Naive thymus-derived CD4-positive, alpha-beta T cell (primary cell): ENCODE measurements at regions of chr11 and their contacts with region 1.

Region 1: GRCh38 chr11:124070915-124071635 is 29.9 kb upstream of the OR10G7 start:
- DNase-seq: peak; percentile 33 to 63 (median 56)
- ATAC-seq: peak; percentile 57
- H3K4me3 ChIP-seq: no peak overlapping the region
- H3K4me3 Mint-ChIP-seq: no peak overlapping the region
- H3K27ac ChIP-seq: no peak overlapping the region
- H3K27ac Mint-ChIP-seq: no peak overlapping the region
- H3K4me1 ChIP-seq: no peaks in the 10 kb centered on the region
- H3K4me1 Mint-ChIP-seq: peaks cover 0 to 21% (median 0%) of the 10 kb centered on the region in 7 donors
- H3K27me3 ChIP-seq: peaks cover 0 to 4% of the 10 kb centered on the region in 2 donors
- H3K27me3 Mint-ChIP-seq: peaks cover 24 to 68% (median 54%) of the 10 kb centered on the region in 5 donors

Region 2: GRCh38 chr11:124114942-124115781 is 44.1 kb after region 1 on chr11 and contains the start of gene VWA5A:
- CTCF ChIA-PET with region 1: interaction called, 3 read pairs
- POLR2A ChIA-PET with region 1: no interaction called
- intact Hi-C with region 1: loop called in 1 of 2 experiments (anchors 1 kb)
- DNase-seq: peak; percentile 22 to 73 (median 59)
- ATAC-seq: peak; percentile 97
- H3K4me3 ChIP-seq: peak within 1 kb of the TSS; percentile 89
- H3K4me3 Mint-ChIP-seq: peak within 1 kb of the TSS; percentile 86 to 100 (median 90)
- H3K27ac ChIP-seq: peak within 1 kb of the TSS; percentile 41
- H3K27ac Mint-ChIP-seq: peak within 1 kb of the TSS; percentile 66 to 95 (median 83)
- H3K4me1 ChIP-seq: peaks cover 7 to 8% of the 10 kb centered on the region in 2 donors
- H3K4me1 Mint-ChIP-seq: peaks cover 13 to 37% (median 22%) of the 10 kb centered on the region in 7 donors
- H3K27me3 ChIP-seq: no peaks in the 10 kb centered on the region
- H3K27me3 Mint-ChIP-seq: peaks cover 0 to 15% (median 12%) of the 10 kb centered on the region in 5 donors
- total RNA-seq, gene VWA5A: 5.2 to 10.2 (median 8.3) TPM

Region 3: GRCh38 chr11:124194698-124195410 is 123.8 kb after region 1 on chr11:
- CTCF ChIA-PET with region 1: interaction called, 26 read pairs
- POLR2A ChIA-PET with region 1: no interaction called
- intact Hi-C with region 1: loop called (anchors 1 kb)
- DNase-seq: peak in 6 of 9 donors; percentile 14 to 34 (median 26)
- ATAC-seq: peak; percentile 83
- H3K4me3 ChIP-seq: no peak overlapping the region
- H3K4me3 Mint-ChIP-seq: no peak overlapping the region
- H3K27ac ChIP-seq: no peak overlapping the region
- H3K27ac Mint-ChIP-seq: no peak overlapping the region
- H3K4me1 ChIP-seq: no peaks in the 10 kb centered on the region
- H3K4me1 Mint-ChIP-seq: peaks cover 0 to 2% (median 0%) of the 10 kb centered on the region in 7 donors
- H3K27me3 ChIP-seq: no peaks in the 10 kb centered on the region
- H3K27me3 Mint-ChIP-seq: peaks cover under 1 to 24% (median 13%) of the 10 kb centered on the region in 5 donors

Region 4: GRCh38 chr11:124329787-124330478 is 258.9 kb after region 1 on chr11:
- CTCF ChIA-PET with region 1: no interaction called
- POLR2A ChIA-PET with region 1: no interaction called
- intact Hi-C with region 1: loop called in 1 of 2 experiments (anchors 10 kb)
- DNase-seq: no peak
- ATAC-seq: no peak
- H3K4me3 ChIP-seq: no peak overlapping the region
- H3K4me3 Mint-ChIP-seq: no peak overlapping the region
- H3K27ac ChIP-seq: no peak overlapping the region
- H3K27ac Mint-ChIP-seq: no peak overlapping the region
- H3K4me1 ChIP-seq: no peaks in the 10 kb centered on the region
- H3K4me1 Mint-ChIP-seq: peaks cover 0 to 4% (median 0%) of the 10 kb centered on the region in 7 donors
- H3K27me3 ChIP-seq: no peaks in the 10 kb centered on the region
- H3K27me3 Mint-ChIP-seq: peaks cover 7 to 29% (median 18%) of the 10 kb centered on the region in 5 donors

Region 5: GRCh38 chr11:124402326-124402922 is 331.3 kb after region 1 on chr11:
- CTCF ChIA-PET with region 1: no interaction called
- POLR2A ChIA-PET with region 1: no interaction called
- intact Hi-C with region 1: loop called in 1 of 2 experiments (anchors 5 kb)
- DNase-seq: peak in 5 of 9 donors; percentile 2 to 47 (median 14)
- ATAC-seq: peak; percentile 63
- H3K4me3 ChIP-seq: no peak overlapping the region
- H3K4me3 Mint-ChIP-seq: no peak overlapping the region
- H3K27ac ChIP-seq: no peak overlapping the region
- H3K27ac Mint-ChIP-seq: peak overlapping the region in 1 of 9 donors; percentile 68
- H3K4me1 ChIP-seq: no peaks in the 10 kb centered on the region
- H3K4me1 Mint-ChIP-seq: peaks cover 0 to 2% (median 0%) of the 10 kb centered on the region in 7 donors
- H3K27me3 ChIP-seq: peaks cover 0 to 2% of the 10 kb centered on the region in 2 donors
- H3K27me3 Mint-ChIP-seq: peaks cover 5 to 11% (median 6%) of the 10 kb centered on the region in 5 donors

Region 6: GRCh38 chr11:124586238-124586860 is 515.3 kb after region 1 on chr11:
- CTCF ChIA-PET with region 1: interaction called, 3 read pairs
- POLR2A ChIA-PET with region 1: no interaction called
- intact Hi-C with region 1: loop called (anchors 1 to 5 kb)
- DNase-seq: peak in 7 of 9 donors; percentile 7 to 35 (median 24)
- ATAC-seq: peak; percentile 45
- H3K4me3 ChIP-seq: no peak overlapping the region
- H3K4me3 Mint-ChIP-seq: no peak overlapping the region
- H3K27ac ChIP-seq: no peak overlapping the region
- H3K27ac Mint-ChIP-seq: no peak overlapping the region
- H3K4me1 ChIP-seq: no peaks in the 10 kb centered on the region
- H3K4me1 Mint-ChIP-seq: peaks cover 0 to 2% (median 0%) of the 10 kb centered on the region in 7 donors
- H3K27me3 ChIP-seq: no peaks in the 10 kb centered on the region
- H3K27me3 Mint-ChIP-seq: peaks cover 17 to 39% (median 27%) of the 10 kb centered on the region in 5 donors